ENCODE measurements at regions of chr11 and their contacts with region 1.

Region 1: DNA sequence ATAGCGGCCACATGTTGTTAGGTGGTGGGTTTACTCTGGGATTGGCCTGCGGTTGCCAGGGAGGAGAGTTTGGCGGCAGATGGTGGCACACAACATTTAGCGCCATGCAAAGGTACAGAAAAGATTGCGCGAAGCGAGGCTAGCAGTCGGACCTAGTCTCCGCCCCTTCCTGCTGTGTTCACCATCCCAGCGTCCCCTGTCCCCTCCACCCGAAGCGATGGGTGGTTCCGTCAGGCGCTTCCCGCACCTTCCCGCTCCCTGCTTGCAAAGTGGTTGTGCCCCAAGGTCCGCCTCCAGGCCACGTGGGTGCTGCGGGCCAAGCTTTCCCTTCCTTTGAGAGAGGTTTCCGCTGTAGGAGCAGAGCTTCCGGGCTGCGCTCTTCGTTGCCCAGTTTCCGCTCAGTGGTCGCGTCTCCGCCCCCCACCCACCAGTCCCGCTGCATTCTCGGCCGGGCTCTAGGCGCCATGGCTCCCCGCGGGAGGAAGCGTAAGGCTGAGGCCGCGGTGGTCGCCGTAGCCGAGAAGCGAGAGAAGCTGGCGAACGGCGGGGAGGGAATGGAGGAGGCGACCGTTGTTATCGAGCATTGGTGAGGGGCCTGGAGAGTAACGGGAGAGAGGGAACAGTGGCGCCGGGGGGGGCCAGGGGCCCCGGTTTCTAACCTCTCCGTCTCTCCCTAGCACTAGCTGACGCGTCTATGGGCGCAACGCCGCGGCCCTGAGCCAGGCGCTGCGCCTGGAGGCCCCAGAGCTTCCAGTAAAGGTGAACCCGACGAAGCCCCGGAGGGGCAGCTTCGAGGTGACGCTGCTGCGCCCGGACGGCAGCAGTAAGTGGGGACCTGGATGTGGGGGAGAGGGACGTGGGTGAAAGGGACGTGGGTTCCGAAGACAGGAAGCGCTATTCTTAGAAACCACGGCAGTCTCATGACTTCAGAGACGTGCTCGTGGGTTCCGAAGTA is at the start of gene SELENOH:
- H3K4me3 ChIP-seq: peak within 1 kb of the TSS; percentile 85
- H3K27ac ChIP-seq: peak within 1 kb of the TSS; percentile 75
- H3K4me1 ChIP-seq: no peaks in the 10 kb centered on the region
- CTCF ChIP-seq: no peak

Region 2: DNA sequence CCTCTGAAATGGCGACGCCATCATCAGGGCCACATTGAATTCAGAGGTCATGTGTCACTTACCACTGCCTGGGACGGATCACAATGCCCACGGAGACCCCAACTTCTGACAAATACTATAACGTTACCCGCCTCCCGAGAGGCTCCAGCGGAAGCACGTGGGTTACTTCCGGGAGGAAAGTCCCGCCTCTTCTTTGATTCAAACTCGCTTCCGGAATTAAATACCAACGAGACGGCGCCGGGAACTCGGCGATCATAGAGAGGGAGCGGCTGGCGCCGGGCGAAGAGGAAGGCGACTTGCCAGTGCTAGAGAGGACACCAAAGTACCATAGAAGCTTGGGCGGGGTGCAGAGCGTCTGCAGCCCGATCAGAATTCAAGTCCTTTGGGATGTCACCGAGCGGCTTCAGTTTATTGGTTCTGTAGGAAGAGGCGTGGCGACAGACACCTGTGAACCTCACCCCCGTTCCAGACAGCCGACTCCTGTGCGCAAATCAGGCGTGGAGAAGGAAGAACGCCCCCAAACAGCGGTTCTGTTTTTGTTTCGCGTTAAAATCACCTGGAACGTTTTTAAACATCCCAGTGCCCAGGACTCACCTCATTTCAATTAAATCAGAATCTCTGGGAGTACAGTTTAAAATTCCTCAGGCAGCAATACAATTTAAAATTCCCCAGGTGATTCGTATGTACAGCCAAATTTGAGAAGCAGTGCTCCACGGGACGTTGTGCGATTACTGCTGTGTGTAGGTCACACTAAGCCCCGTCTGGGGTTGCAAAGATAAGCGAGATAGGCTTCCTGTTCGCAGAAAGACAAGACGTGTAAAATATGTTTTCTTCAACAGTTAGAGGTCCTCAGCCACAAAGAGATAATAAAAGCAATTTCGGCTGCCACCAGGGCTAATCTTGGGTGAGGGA is 210.6 kb before region 1 on chr11 and contains the start of gene TIMM10:
- CTCF ChIA-PET with region 1: no interaction called
- POLR2A ChIA-PET with region 1: no interaction called
- H3K4me3 ChIP-seq: peak within 1 kb of the TSS; percentile 94
- H3K27ac ChIP-seq: no peak within 1 kb of the TSS
- H3K4me1 ChIP-seq: no peaks in the 10 kb centered on the region
- CTCF ChIP-seq: no peak

Region 3: GRCh38 chr11:57712256-57713150 is 28.9 kb before region 1 on chr11 and contains the start of gene TMX2:
- CTCF ChIA-PET with region 1: no interaction called
- POLR2A ChIA-PET with region 1: interaction called, 15 read pairs
- H3K4me3 ChIP-seq: peak within 1 kb of the TSS; percentile 97
- H3K27ac ChIP-seq: peak within 1 kb of the TSS; percentile 66
- H3K4me1 ChIP-seq: no peaks in the 10 kb centered on the region
- CTCF ChIP-seq: no peak

Region 4: DNA sequence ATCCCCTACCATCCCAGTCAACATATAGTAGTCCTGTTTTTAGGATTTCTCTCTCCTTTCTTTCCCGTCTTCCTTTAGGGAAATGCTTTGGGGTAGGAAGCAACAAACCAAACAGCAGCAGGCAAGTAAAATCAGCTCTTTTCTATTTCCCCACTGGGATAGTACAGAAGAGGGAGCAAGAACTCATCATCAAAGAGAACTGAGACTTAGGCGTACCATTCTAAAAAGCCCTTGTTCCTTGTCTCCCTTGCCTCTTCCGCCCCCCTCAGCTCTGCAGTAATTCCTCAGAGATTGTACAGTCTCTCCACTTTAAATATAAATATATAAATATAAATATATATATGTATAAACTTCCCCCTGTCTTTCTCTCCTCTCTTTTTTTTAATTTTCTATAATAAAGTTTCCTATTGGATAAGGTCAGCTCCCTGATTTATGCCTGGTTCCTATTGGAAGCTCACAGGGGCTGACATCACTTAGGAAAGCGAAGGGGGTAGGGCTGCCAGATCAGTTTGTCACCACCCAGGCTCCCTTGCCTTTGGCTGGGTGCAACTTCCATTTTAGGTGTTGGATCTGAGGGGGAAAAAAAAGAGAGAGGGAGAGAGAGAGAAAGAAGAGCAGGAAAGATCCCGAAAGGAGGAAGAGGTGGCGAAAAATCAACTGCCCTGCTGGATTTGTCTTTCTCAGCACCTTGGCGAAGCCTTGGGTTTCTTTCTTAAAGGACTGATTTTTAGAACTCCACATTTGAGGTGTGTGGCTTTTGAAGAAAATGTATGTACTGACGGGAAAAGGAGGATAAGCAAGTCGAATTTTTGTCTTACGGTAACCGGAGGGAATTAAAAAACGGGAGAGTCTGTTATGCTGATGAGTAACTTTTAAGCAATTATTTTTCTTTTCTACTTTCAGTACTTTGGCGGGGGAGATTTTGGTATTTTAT is 20.2 kb after region 1 on chr11 and contains the start of gene CTNND1:
- CTCF ChIA-PET with region 1: no interaction called
- POLR2A ChIA-PET with region 1: interaction called, 33 read pairs
- H3K4me3 ChIP-seq: peak within 1 kb of the TSS; percentile 50
- H3K27ac ChIP-seq: peak within 1 kb of the TSS; percentile 86
- H3K4me1 ChIP-seq: peaks cover 8% of the 10 kb centered on the region; the same call in 1 of the 2 replicates
- CTCF ChIP-seq: no peak

Region 5: GRCh38 chr11:57778318-57779037 is 37.1 kb after region 1 on chr11:
- CTCF ChIA-PET with region 1: interaction called, 3 read pairs
- POLR2A ChIA-PET with region 1: interaction called, 21 read pairs
- H3K4me3 ChIP-seq: peak overlapping the region; percentile 18
- H3K27ac ChIP-seq: peak overlapping the region; percentile 50
- H3K4me1 ChIP-seq: peaks cover 12% of the 10 kb centered on the region; the same call in 1 of the 2 replicates
- CTCF ChIP-seq: no peak

Region 6: DNA sequence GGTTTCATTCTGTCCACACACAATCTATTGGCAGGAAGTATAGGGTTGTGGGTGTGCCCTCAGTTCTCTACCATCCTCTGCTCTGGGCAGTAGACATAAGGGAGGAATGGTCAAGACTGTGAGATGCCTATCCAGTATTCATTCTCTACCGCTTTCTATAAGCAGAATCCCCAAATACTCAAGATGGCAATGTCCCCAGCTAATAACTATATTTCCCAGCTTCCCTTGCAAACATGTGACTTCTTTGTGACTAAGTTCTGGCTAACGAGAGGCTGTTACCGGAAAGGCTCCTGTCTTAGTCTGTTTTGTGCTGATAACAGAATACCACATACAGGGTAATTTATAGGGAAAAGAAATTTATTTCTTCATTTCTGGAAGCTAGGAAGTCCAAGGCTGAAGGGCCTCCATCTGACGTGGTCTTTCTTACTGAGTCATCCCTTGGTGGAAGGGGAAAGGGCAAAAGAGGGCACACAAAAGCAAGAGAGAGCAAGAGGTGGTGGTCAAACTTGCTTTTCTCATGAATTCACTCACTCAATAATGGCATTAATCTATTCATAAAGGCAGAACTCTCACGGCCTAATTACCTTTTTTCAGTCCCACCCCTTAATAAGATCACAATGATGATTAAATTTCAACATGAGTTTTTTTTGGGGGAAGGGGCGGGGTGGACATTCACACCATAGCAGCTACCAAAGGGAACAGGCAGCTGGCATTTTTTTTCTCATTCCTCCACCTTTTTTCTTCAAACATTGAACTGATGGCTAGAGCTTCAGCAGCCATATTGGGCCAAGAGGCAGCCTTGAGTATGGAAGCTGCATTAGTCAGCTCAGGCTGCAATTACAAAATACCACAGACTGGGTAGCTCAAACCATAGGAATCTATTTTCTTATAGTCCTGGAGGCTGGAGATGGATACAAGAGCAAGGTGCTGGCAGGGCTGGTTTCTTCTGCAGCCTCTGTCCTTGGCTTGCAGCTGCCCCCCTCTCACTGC is 172.6 kb after region 1 on chr11:
- CTCF ChIA-PET with region 1: no interaction called
- POLR2A ChIA-PET with region 1: no interaction called
- H3K4me3 ChIP-seq: no peak overlapping the region
- H3K27ac ChIP-seq: no peak overlapping the region
- H3K4me1 ChIP-seq: no peaks in the 10 kb centered on the region
- CTCF ChIP-seq: no peak

Region 7: DNA sequence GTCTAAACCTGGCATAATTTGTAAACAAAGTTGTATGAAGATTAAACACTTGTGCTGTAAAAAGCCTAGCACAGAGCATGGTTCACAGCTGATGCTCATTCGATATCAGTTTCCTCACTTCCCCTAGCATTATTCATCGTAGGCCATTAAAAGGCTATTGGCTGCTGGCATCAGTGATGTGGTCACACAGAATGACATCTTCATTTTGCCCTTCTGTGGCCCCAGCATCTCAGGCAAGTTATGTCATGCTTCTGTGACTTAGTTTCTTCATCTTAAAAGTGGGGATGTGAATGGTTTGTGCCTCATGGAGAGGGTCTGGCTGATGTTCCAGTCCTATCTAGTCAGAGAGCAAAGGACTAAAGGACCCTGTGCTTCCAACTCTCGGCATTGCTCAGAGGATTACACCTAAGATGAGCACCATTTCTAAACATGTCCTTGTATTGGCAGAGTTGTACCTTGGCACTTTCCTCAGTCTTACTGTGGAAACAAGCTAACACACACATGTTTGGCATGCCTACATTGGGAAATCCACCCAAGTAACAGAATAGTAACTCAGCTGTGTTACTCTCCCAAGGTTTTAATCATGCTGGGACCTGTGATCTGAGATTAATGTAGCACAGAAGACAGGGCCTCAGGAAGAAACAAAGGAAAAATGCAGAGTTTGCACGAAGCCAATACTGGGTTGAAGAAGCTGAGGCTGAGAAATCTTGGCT is 198.8 kb after region 1 on chr11:
- CTCF ChIA-PET with region 1: no interaction called
- POLR2A ChIA-PET with region 1: no interaction called
- H3K4me3 ChIP-seq: no peak overlapping the region
- H3K27ac ChIP-seq: no peak overlapping the region
- H3K4me1 ChIP-seq: no peaks in the 10 kb centered on the region
- CTCF ChIP-seq: no peak

Measured in HEK293 (cell line).